Activated T-helper 2 cell treated with anti-CD3 and anti-CD28 coated beads, Interferon-gamma antibody, Interleukin-2, Interleukin-4, amounts not matched to agents 10 μg/mL and 5 μg/mL and 100 μg/mL, durations not matched to agents 14 hours and 24 hours and 36 hours (primary cell): ENCODE measurements at regions of chr5 and their contacts with region 1.

Region 1: DNA sequence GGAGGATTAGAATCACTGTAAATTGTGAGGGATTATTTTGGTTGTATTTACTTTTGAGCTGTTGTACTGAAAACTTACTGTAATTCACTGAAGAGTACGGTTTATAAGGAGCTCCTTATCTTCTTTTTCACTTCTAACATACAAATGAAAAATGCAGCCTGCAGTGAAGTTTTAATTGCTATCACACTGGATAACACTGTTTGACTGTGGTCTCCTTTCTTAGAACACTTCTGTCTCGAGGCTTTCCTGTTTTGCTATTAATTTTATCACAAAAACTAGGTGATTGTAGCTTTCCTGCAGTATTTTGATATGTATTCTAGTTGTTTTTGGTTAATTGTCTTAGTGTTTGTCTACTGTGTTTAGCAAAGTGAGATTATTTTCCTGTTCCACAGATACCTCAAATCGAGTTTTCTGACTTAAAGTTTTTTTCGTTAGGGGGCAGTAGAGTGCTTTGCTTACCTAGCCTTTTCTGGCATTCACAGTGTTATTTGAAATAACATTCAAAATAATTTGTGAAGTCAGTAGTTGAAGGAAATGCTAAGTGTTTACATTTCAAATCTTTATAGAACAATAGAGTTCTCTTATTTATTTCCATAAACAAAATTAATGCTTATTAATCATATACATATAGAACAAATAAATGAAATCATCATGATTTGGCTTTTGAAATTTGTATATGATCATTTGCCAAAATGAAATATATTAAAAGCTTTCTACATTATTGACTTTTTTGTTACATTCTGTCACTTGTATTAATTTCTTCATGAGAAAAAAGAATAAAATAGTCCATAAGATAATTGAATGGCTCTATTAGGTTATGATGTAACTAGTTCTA is 52.9 kb downstream of the COMMD10 start:
- DNase-seq: no peak
- H3K4me3 Mint-ChIP-seq: no peak overlapping the region
- H3K27ac Mint-ChIP-seq: no peak overlapping the region
- H3K4me1 Mint-ChIP-seq: peaks cover 21% of the 10 kb centered on the region
- H3K27me3 Mint-ChIP-seq: no peaks in the 10 kb centered on the region

Region 2: GRCh38 chr5:116947691-116948528 is 810.1 kb after region 1 on chr5:
- intact Hi-C with region 1: loop called (anchors 1 kb)
- DNase-seq: peak; percentile 48
- H3K4me3 Mint-ChIP-seq: no peak overlapping the region
- H3K27ac Mint-ChIP-seq: no peak overlapping the region
- H3K4me1 Mint-ChIP-seq: no peaks in the 10 kb centered on the region
- H3K27me3 Mint-ChIP-seq: no peaks in the 10 kb centered on the region